H1 (cell line): ENCODE measurements at regions of chr4 and their contacts with region 1.

Region 1: GRCh38 chr4:48830706-48831531 is at the start of gene OCIAD1:
- DNase-seq: peak; percentile 89 to 99
- H3K4me3 ChIP-seq: peak within 1 kb of the TSS; percentile 96 to 100 (median 100)
- H3K27ac ChIP-seq: peak within 1 kb of the TSS; percentile 99
- H3K4me1 ChIP-seq: peaks cover 0 to 3% (median 1%) of the 10 kb centered on the region in 4 experiments; a peak in 2 of 7 replicates
- H3K27me3 ChIP-seq: no peaks in the 10 kb centered on the region; a peak in 1 of 7 replicates
- CTCF ChIP-seq: no peak
- EP300 ChIP-seq: no peak
- POLR2A ChIP-seq: peak; percentile 34 to 94
- RAD21 ChIP-seq: no peak
- total RNA-seq, gene OCIAD1: 156 and 163 TPM in 2 replicates

Region 2: DNA sequence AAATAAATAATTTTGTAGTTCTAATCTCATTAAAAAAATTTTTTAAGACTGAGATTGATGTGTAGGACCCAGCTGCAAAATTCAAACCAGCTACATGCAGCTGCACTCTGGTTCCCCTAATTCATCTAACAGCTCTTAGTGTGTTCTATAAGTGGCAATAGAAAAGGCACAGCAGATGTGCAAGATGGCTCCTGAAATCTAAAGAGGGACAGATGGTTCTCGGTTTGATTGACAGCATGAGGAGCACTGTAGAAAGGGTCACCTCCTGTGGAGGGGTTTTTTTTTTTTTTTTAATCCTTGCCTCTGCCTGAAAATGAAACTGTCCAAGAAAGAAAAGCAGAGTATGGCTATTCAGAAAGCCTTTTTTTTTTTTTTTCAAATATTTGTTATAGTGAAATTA is 17.0 kb before region 1 on chr4:
- CTCF ChIA-PET with region 1: interaction called, 3 read pairs
- POLR2A ChIA-PET with region 1: interaction called, 10 read pairs
- DNase-seq: no peak
- H3K4me3 ChIP-seq: no peak overlapping the region
- H3K27ac ChIP-seq: no peak overlapping the region
- H3K4me1 ChIP-seq: no peaks in the 10 kb centered on the region; a peak in 2 of 7 replicates
- H3K27me3 ChIP-seq: no peaks in the 10 kb centered on the region
- CTCF ChIP-seq: no peak
- EP300 ChIP-seq: no peak
- POLR2A ChIP-seq: no peak
- RAD21 ChIP-seq: no peak

Region 3: DNA sequence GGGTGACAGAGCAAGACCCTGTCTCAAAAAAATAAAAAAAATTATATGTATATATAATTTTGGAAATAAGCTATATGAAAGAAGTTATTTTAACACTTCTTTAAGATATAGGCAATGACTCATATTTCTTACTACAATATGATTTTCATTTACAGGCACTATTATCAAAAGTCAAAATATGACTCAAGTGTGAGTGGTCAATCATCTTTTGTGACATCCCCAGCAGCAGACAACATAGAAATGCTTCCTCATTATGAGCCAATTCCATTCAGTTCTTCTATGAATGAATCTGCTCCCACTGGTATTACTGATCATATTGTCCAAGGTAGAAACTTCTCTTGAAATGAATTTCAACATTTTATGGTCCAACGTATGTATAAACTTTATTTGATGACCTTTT is 20.7 kb after region 1 on chr4:
- CTCF ChIA-PET with region 1: no interaction called
- POLR2A ChIA-PET with region 1: interaction called, 113 read pairs
- DNase-seq: no peak
- H3K4me3 ChIP-seq: no peak overlapping the region
- H3K27ac ChIP-seq: no peak overlapping the region
- H3K4me1 ChIP-seq: no peaks in the 10 kb centered on the region
- H3K27me3 ChIP-seq: no peaks in the 10 kb centered on the region
- CTCF ChIP-seq: no peak
- EP300 ChIP-seq: no peak
- POLR2A ChIP-seq: no peak
- RAD21 ChIP-seq: no peak

Region 4: DNA sequence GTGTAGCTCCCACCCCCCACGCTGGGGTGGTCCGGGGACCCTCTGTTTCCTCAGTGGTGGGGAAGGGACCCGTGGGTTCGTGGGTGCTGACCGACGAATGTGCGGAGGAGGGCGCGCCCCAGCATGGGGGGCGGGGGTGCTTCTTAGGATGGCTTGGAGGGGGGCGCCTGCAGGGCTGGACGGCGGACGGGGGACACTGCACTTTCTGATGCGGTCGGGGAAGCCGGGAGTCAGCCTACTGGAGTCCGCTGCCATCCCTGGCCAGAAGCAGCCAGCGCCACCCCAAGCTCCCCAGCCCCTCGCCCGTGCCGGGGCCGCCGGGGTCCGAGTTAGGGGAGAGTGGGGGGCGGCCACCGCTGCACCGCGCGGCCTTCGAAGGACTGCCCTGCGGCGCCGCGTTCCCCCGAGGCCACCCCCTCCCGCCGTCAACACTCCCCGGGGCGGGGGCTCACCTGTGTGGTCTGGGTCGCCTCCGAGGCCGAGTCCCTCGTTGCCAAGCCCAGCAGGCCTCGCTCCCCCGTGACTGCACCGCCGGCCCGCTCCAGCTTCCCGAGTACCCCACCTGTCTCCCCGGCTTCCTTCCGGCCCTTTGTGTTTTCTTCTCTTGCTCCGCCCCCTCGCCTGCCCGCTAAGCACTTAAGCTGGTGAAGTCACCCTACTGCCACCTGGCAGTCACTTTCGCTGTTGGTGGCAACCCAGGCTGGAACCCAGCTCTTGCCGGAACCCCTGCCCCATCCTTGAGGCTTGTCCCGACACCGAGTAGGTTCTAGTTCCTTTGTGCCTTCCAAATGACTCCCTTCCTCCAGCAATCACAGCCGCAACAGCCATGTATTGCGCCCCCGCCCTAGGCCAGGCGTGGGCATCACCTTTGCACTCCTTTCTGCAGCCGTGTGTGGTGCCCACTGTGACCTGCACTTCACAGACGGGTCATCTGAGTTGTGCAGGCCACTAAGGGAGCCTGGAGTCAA is 75.6 kb after region 1 on chr4 and contains the start of gene OCIAD2:
- CTCF ChIA-PET with region 1: no interaction called
- POLR2A ChIA-PET with region 1: interaction called, 12 read pairs
- DNase-seq: peak; percentile 59 to 81
- H3K4me3 ChIP-seq: peak within 1 kb of the TSS; percentile 56 to 83 (median 70)
- H3K27ac ChIP-seq: peak within 1 kb of the TSS; percentile 64; the same call in 1 of the 2 replicates
- H3K4me1 ChIP-seq: peaks cover 0 to 9% (median 4%) of the 10 kb centered on the region in 4 experiments; a peak in 6 of 7 replicates
- H3K27me3 ChIP-seq: no peaks in the 10 kb centered on the region
- CTCF ChIP-seq: peak in 2 of 3 experiments; percentile 15 to 24; a peak in 2 of 4 replicates
- EP300 ChIP-seq: peak in 1 of 2 experiments; percentile 56; a peak in 1 of 3 replicates
- POLR2A ChIP-seq: peak; percentile 73 to 82
- RAD21 ChIP-seq: peak; percentile 10 to 29; a peak in 1 of 4 replicates
- total RNA-seq, gene OCIAD2: 122 and 131 TPM in 2 replicates